Aorta (tissue), 5 donors: ENCODE measurements at regions of chr5 and their contacts with region 1.

Region 1: DNA sequence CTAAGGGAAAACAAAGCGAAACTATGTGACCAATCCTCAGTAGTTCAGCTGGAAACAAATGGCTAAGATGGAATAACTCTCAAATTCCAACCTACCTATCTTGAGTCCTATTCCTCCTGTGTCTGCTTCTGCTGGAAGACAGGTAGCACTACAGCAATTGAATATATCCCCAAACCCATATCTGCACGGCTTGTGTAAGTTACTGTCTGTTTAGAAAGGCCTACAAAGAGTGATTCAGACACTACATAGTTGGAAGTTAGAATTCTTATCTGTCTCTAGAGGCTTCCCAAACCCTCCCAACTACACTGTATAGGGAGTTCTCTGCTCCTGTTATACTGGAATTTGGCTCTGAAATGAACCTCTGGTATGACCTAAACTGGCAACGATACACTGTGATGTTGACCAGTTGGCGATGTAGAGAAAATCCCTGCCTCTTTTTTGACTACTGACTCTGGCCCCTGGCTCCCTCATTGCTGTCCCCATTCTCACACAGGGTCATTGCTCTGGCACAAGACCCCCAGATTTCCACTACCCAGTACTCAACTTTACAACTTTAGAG is 22.6 kb upstream of the NADK2 start:
- DNase-seq: no peak
- ATAC-seq: no peak
- H3K4me3 ChIP-seq: no peak overlapping the region
- H3K27ac ChIP-seq: no peak overlapping the region
- H3K4me1 ChIP-seq: no peaks in the 10 kb centered on the region
- H3K27me3 ChIP-seq: no peaks in the 10 kb centered on the region

Region 2: GRCh38 chr5:36403632-36404311 is 139.5 kb after region 1 on chr5:
- intact Hi-C with region 1: loop called in 1 of 2 experiments (anchors 10 kb)
- DNase-seq: peak in 1 of 2 donors; percentile 68
- ATAC-seq: peak; percentile 77
- H3K4me3 ChIP-seq: no peak overlapping the region
- H3K27ac ChIP-seq: no peak overlapping the region
- H3K4me1 ChIP-seq: no peaks in the 10 kb centered on the region
- H3K27me3 ChIP-seq: no peaks in the 10 kb centered on the region

Region 3: GRCh38 chr5:36507332-36507952 is 243.2 kb after region 1 on chr5:
- intact Hi-C with region 1: loop called in 1 of 2 experiments (anchors 10 kb)
- DNase-seq: peak; percentile 89 to 92
- ATAC-seq: peak; percentile 80
- H3K4me3 ChIP-seq: no peak overlapping the region
- H3K27ac ChIP-seq: no peak overlapping the region
- H3K4me1 ChIP-seq: no peaks in the 10 kb centered on the region
- H3K27me3 ChIP-seq: no peaks in the 10 kb centered on the region